Activated CD8-positive, alpha-beta T cell treated with anti-CD3 and anti-CD28 coated beads for 36 hours (primary cell): ENCODE measurements at regions of chr2 and their contacts with region 1.

Region 1: GRCh38 chr2:200864176-200864976 is at the start of gene CLK1:
- DNase-seq: peak; percentile 98
- ATAC-seq: peak; percentile 81
- H3K4me3 Mint-ChIP-seq: peak within 1 kb of the TSS; percentile 85
- H3K27ac Mint-ChIP-seq: peak within 1 kb of the TSS; percentile 97
- H3K4me1 Mint-ChIP-seq: peaks cover 28% of the 10 kb centered on the region
- H3K27me3 Mint-ChIP-seq: peaks cover 2% of the 10 kb centered on the region
- CTCF ChIP-seq: no peak
- total RNA-seq, gene CLK1: 121 to 122 TPM

Region 2: DNA sequence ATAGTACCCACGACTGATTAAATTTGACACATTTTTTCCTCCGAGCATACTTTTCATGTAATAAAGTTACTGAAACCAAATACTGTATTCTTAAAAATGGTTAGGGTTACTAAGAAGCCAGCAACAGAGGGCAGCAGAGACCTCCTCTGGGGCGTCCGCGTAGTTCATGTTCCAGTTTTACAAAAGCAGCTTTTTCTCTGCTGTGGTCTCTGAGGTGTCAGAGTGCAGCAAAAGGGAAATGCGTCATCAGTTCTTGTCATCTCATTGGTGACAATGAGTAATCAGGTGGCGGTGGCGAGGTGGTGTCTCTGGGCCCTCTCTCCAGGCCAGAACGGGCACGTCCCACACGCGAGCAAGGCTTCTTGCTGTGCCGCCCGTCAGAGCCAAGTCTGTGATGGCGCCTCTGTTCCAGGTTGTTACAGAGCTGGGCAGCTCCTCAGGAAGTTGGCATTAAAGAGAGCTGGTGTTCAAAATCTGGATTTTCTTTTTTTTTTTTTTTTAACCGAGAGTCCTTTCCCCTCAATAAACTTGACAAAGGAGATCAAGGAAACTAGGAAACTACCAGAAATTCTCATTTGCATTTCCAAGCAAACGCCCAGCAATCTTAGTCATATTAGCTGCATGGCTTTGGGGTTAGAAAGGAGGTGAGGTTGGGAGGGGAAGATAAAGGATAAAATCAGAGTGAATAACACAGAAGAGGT is 151.2 kb before region 1 on chr2:
- CTCF ChIA-PET with region 1: interaction called, 13 read pairs
- POLR2A ChIA-PET with region 1: interaction called, 22 read pairs
- intact Hi-C with region 1: loop called (anchors 2 kb)
- DNase-seq: peak; percentile 98
- ATAC-seq: peak; percentile 95
- H3K4me3 Mint-ChIP-seq: peak overlapping the region; percentile 73
- H3K27ac Mint-ChIP-seq: peak overlapping the region; percentile 100
- H3K4me1 Mint-ChIP-seq: peaks cover 43% of the 10 kb centered on the region
- H3K27me3 Mint-ChIP-seq: peaks cover 4% of the 10 kb centered on the region
- CTCF ChIP-seq: peak; percentile 71

Region 3: GRCh38 chr2:200820573-200821234 is 43.7 kb before region 1 on chr2:
- CTCF ChIA-PET with region 1: interaction called, 3 read pairs
- POLR2A ChIA-PET with region 1: interaction called, 41 read pairs
- intact Hi-C with region 1: no loop called
- DNase-seq: no peak
- ATAC-seq: no peak
- H3K4me3 Mint-ChIP-seq: no peak overlapping the region
- H3K27ac Mint-ChIP-seq: peak overlapping the region; percentile 54
- H3K4me1 Mint-ChIP-seq: peaks cover 43% of the 10 kb centered on the region
- H3K27me3 Mint-ChIP-seq: no peaks in the 10 kb centered on the region
- CTCF ChIP-seq: no peak

Region 4: GRCh38 chr2:200850512-200851256 is 13.7 kb before region 1 on chr2:
- CTCF ChIA-PET with region 1: no interaction called
- POLR2A ChIA-PET with region 1: interaction called, 33 read pairs
- intact Hi-C with region 1: no loop called
- DNase-seq: no peak
- ATAC-seq: no peak
- H3K4me3 Mint-ChIP-seq: no peak overlapping the region
- H3K27ac Mint-ChIP-seq: peak overlapping the region; percentile 28
- H3K4me1 Mint-ChIP-seq: no peaks in the 10 kb centered on the region
- H3K27me3 Mint-ChIP-seq: no peaks in the 10 kb centered on the region
- CTCF ChIP-seq: no peak

Region 5: GRCh38 chr2:200963124-200963917 is 98.9 kb after region 1 on chr2 and contains the start of gene ORC2:
- CTCF ChIA-PET with region 1: no interaction called
- POLR2A ChIA-PET with region 1: interaction called, 13 read pairs
- intact Hi-C with region 1: no loop called
- DNase-seq: peak; percentile 94
- ATAC-seq: peak; percentile 97
- H3K4me3 Mint-ChIP-seq: peak within 1 kb of the TSS; percentile 92
- H3K27ac Mint-ChIP-seq: peak within 1 kb of the TSS; percentile 96
- H3K4me1 Mint-ChIP-seq: peaks cover 55% of the 10 kb centered on the region
- H3K27me3 Mint-ChIP-seq: no peaks in the 10 kb centered on the region
- CTCF ChIP-seq: peak; percentile 87
- total RNA-seq, gene ORC2: 51.3 to 59.2 TPM

Region 6: GRCh38 chr2:201130524-201131186 is 266.3 kb after region 1 on chr2:
- CTCF ChIA-PET with region 1: no interaction called
- POLR2A ChIA-PET with region 1: interaction called, 21 read pairs
- intact Hi-C with region 1: no loop called
- DNase-seq: peak; percentile 61
- ATAC-seq: peak; percentile 42
- H3K4me3 Mint-ChIP-seq: peak overlapping the region; percentile 95
- H3K27ac Mint-ChIP-seq: peak overlapping the region; percentile 98
- H3K4me1 Mint-ChIP-seq: peaks cover 55% of the 10 kb centered on the region
- H3K27me3 Mint-ChIP-seq: no peaks in the 10 kb centered on the region
- CTCF ChIP-seq: no peak